ENCODE measurements at regions of chr3 and their contacts with region 1.

Region 1: GRCh38 chr3:46299608-46300460 is 54.1 kb upstream of the CCR2 start:
- DNase-seq: no peak
- H3K4me3 Mint-ChIP-seq: no peak overlapping the region
- H3K27ac Mint-ChIP-seq: no peak overlapping the region
- H3K4me1 Mint-ChIP-seq: no peaks in the 10 kb centered on the region
- H3K27me3 Mint-ChIP-seq: peaks cover 63% of the 10 kb centered on the region
- CTCF ChIP-seq: no peak

Region 2: DNA sequence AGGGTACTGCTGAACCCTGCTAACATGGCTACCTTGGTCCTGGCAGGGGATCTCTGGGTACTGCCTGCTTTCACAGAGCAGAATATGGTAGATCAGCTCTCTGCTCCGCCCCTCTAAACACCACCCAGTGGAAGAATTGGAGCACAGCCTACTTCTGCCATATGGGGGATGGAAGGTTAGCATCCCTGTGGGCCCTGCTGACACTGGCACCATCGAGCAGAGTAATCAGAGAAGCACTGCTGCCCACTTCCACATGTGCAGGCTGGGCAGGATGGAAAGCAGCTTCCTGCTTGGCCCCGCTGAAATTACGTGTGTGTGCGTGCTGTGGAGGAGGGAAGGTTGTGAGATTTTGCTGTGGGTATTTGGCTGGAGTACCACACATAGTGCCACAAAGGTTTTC is 116.5 kb before region 1 on chr3:
- CTCF ChIA-PET with region 1: no interaction called
- intact Hi-C with region 1: no loop called
- DNase-seq: no peak
- H3K4me3 Mint-ChIP-seq: no peak overlapping the region
- H3K27ac Mint-ChIP-seq: no peak overlapping the region
- H3K4me1 Mint-ChIP-seq: peaks cover 12% of the 10 kb centered on the region
- H3K27me3 Mint-ChIP-seq: peaks cover 2% of the 10 kb centered on the region
- CTCF ChIP-seq: no peak

Region 3: DNA sequence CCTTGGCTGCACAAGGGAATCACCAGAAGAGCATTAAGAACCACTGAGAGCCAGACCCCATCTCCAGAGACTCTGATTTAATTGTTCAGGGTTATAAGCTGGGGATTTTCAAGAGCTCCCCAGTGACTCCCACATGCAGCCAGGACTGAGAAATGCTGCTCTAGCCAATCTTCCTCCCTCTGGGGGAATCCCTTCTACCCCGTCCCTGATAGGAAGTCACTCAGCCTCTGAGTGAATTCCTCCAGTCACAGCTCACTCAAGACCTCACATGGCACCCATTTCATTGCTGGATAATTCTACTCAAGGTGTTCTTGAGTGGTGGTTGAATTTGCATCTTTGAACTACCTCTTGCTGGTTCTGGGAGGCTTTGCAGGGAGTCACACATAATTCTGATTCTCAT is 46.9 kb before region 1 on chr3:
- CTCF ChIA-PET with region 1: no interaction called
- intact Hi-C with region 1: loop called (anchors 5 kb)
- DNase-seq: no peak
- H3K4me3 Mint-ChIP-seq: no peak overlapping the region
- H3K27ac Mint-ChIP-seq: no peak overlapping the region
- H3K4me1 Mint-ChIP-seq: no peaks in the 10 kb centered on the region
- H3K27me3 Mint-ChIP-seq: peaks cover 37% of the 10 kb centered on the region
- CTCF ChIP-seq: no peak

Region 4: GRCh38 chr3:46368569-46368968 is 68.7 kb after region 1 on chr3:
- CTCF ChIA-PET with region 1: no interaction called
- intact Hi-C with region 1: no loop called
- DNase-seq: peak; percentile 52
- H3K4me3 Mint-ChIP-seq: no peak overlapping the region
- H3K27ac Mint-ChIP-seq: no peak overlapping the region
- H3K4me1 Mint-ChIP-seq: peaks cover 8% of the 10 kb centered on the region
- H3K27me3 Mint-ChIP-seq: peaks cover 73% of the 10 kb centered on the region
- CTCF ChIP-seq: no peak